SK-N-SH (cell line): ENCODE measurements at regions of chr1 and their contacts with region 1.

Region 1: GRCh38 chr1:35715568-35716002 is 3.1 kb downstream of the C1orf216 start:
- DNase-seq: peak; percentile 90
- H3K4me3 ChIP-seq: peak overlapping the region; percentile 10 to 46; a peak in 1 of 4 replicates
- H3K27ac ChIP-seq: peak overlapping the region in 1 of 2 experiments; percentile 40; a peak in 2 of 4 replicates
- H3K4me1 ChIP-seq: peaks cover 0 to 24% of the 10 kb centered on the region in 2 experiments; a peak in 2 of 4 replicates
- H3K27me3 ChIP-seq: no peaks in the 10 kb centered on the region
- CTCF ChIP-seq: peak; percentile 93
- EP300 ChIP-seq: no peak
- RAD21 ChIP-seq: peak; percentile 80

Region 2: DNA sequence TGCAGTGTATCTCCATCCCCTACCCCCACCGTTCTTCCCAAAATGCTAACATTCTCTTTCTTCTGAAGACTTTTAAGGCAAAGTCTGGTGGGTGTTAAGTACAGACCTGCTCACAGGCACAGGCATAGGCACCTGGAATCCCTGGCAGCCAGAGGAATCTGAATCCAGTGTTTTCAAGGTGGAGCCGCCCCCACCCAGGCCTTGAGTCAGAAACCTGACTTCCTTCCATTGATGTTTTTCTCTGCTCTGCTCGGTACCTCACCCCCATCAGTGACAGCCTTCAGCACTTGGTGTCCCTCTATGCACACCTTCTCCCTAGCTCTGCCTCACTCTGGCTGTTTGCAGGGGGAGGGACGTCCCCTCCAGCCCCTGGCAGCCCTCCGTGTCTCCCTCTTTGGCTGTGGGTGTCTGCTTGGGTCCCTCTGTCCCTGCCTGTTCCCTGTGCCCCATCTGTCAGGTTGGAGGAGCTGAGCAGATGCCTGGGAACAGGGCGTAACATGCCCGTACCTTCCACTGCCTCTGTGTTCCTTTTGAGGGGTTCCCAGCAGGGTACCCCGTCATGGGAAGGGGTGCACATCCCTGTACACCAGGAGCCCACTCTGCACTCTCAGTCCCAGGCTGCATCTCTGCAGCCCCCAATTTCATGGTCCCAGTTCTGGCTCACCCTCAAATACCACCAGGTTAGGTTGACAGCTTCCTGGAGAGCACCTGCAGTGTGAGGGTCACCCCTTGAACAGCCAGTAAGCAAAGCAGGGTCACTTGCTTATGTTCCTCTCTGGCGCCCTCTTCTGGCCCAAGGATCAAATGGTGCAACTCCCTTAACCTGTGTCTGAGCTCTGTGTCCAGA is 151.3 kb before region 1 on chr1:
- CTCF ChIA-PET with region 1: interaction called, 347 read pairs
- POLR2A ChIA-PET with region 1: interaction called, 7 read pairs
- DNase-seq: peak; percentile 87
- H3K4me3 ChIP-seq: no peak overlapping the region; a peak in 1 of 4 replicates
- H3K27ac ChIP-seq: no peak overlapping the region
- H3K4me1 ChIP-seq: peaks cover 3 to 5% of the 10 kb centered on the region in 2 experiments; a peak in 1 of 4 replicates
- H3K27me3 ChIP-seq: no peaks in the 10 kb centered on the region
- CTCF ChIP-seq: peak; percentile 82
- EP300 ChIP-seq: no peak
- RAD21 ChIP-seq: peak; percentile 72

Region 3: GRCh38 chr1:35577071-35577998 is 138.2 kb before region 1 on chr1:
- CTCF ChIA-PET with region 1: interaction called, 347 read pairs
- POLR2A ChIA-PET with region 1: interaction called, 3 read pairs
- DNase-seq: no peak
- H3K4me3 ChIP-seq: no peak overlapping the region
- H3K27ac ChIP-seq: no peak overlapping the region
- H3K4me1 ChIP-seq: peaks cover 0 to 5% of the 10 kb centered on the region in 2 experiments; a peak in 1 of 4 replicates
- H3K27me3 ChIP-seq: no peaks in the 10 kb centered on the region
- CTCF ChIP-seq: no peak
- EP300 ChIP-seq: no peak
- RAD21 ChIP-seq: no peak

Region 4: DNA sequence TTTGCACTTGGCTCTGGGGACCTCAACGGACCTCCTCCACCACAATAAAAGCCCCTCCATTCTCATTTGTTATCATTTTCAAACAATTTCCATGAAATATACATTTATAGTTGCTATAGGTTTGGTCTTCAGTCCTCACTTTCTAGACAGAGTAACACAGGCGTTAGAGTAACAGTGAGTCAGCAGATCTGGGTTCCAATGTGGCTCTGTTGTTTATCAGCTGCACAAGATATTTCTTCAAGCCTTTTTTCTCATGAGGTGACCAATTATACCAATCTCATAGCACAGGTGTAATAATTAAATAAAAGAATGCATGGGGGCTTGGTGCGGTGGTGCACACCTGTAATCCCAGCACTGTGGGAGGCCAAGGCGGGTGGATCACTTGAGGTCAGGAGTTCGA is 41.5 kb before region 1 on chr1:
- CTCF ChIA-PET with region 1: interaction called, 11 read pairs
- POLR2A ChIA-PET with region 1: no interaction called
- DNase-seq: no peak
- H3K4me3 ChIP-seq: no peak overlapping the region
- H3K27ac ChIP-seq: no peak overlapping the region
- H3K4me1 ChIP-seq: no peaks in the 10 kb centered on the region
- H3K27me3 ChIP-seq: peaks cover 4% of the 10 kb centered on the region; the same call in 1 of the 2 replicates
- CTCF ChIP-seq: no peak
- EP300 ChIP-seq: no peak
- RAD21 ChIP-seq: no peak